HCT116 (cell line): ENCODE measurements at regions of chrX and their contacts with region 1.

Region 1: DNA sequence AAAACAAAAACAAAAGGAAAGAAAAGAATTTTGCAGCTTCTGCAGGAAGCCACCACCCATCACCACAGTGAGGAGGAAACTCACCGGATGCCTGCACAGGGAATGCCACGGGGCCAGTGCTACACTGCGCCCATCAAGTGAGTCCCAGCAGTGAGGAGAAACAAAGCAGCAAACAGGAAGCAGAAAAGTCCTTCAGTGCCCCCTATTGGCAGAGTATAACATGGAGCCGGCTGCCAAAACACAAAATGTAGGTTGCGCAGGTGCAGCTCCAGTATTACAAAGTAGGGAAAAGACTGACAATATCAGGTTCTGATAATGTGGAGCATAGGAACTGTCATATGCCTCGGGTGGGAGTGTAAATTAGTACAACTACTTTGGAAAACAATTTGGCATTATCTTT is 23.3 kb upstream of the SCML2 start:
- DNase-seq: peak; percentile 29
- ATAC-seq: peak; percentile 92
- H3K4me3 ChIP-seq: no peak overlapping the region
- H3K27ac ChIP-seq: no peak overlapping the region
- H3K4me1 ChIP-seq: no peaks in the 10 kb centered on the region
- H3K27me3 ChIP-seq: no peaks in the 10 kb centered on the region
- CTCF ChIP-seq: peak; percentile 38 to 64 (median 56); a peak in 5 of 6 replicates
- POLR2A ChIP-seq: no peak
- RAD21 ChIP-seq: peak; percentile 69

Region 2: GRCh38 chrX:17744896-17745523 is 632.8 kb before region 1 on chrX:
- CTCF ChIA-PET with region 1: no interaction called
- POLR2A ChIA-PET with region 1: no interaction called
- RAD21 ChIA-PET with region 1: no interaction called
- intact Hi-C with region 1: loop called (anchors 2 kb)
- DNase-seq: no peak
- ATAC-seq: no peak
- H3K4me3 ChIP-seq: no peak overlapping the region
- H3K27ac ChIP-seq: no peak overlapping the region
- H3K4me1 ChIP-seq: no peaks in the 10 kb centered on the region
- H3K27me3 ChIP-seq: no peaks in the 10 kb centered on the region
- CTCF ChIP-seq: peak; percentile 17 to 44 (median 24); a peak in 3 of 6 replicates
- POLR2A ChIP-seq: no peak
- RAD21 ChIP-seq: peak; percentile 51

Region 3: DNA sequence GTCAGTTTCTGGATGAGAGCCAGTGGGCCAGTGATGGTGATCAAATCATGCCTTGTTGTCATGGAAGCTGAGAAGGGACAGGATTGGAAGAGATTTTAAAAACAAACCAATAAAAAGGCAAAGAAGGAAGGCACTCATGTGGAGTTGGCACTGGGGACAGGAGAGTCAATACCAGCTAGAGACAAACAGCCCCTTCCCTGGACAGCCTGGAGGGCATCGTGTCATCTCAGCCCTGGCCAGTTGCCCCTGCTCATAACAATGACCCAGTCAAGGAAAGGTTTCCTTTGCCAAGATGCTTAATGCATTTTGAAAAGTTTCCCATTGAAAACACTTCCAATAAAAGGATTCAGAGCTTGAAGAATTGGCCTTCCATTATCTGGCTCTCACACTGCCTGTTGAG is 585.0 kb before region 1 on chrX:
- CTCF ChIA-PET with region 1: no interaction called
- POLR2A ChIA-PET with region 1: no interaction called
- RAD21 ChIA-PET with region 1: no interaction called
- intact Hi-C with region 1: loop called (anchors 10 kb)
- DNase-seq: no peak
- ATAC-seq: no peak
- H3K4me3 ChIP-seq: no peak overlapping the region
- H3K27ac ChIP-seq: no peak overlapping the region
- H3K4me1 ChIP-seq: no peaks in the 10 kb centered on the region
- H3K27me3 ChIP-seq: no peaks in the 10 kb centered on the region
- CTCF ChIP-seq: no peak
- POLR2A ChIP-seq: no peak
- RAD21 ChIP-seq: no peak

Region 4: GRCh38 chrX:17930850-17931249 is 446.9 kb before region 1 on chrX:
- CTCF ChIA-PET with region 1: no interaction called
- POLR2A ChIA-PET with region 1: no interaction called
- RAD21 ChIA-PET with region 1: no interaction called
- intact Hi-C with region 1: loop called (anchors 5 kb)
- DNase-seq: no peak
- ATAC-seq: no peak
- H3K4me3 ChIP-seq: no peak overlapping the region
- H3K27ac ChIP-seq: no peak overlapping the region
- H3K4me1 ChIP-seq: no peaks in the 10 kb centered on the region
- H3K27me3 ChIP-seq: no peaks in the 10 kb centered on the region
- CTCF ChIP-seq: 0 out of 6 replicates have a peak, but pooled peaks of 2 of the 3 experiments have one; percentile 9 to 12
- POLR2A ChIP-seq: no peak
- RAD21 ChIP-seq: peak; percentile 29; the same call in 1 of the 2 replicates

Region 5: GRCh38 chrX:18228069-18228468 is 149.7 kb before region 1 on chrX:
- CTCF ChIA-PET with region 1: no interaction called
- POLR2A ChIA-PET with region 1: no interaction called
- RAD21 ChIA-PET with region 1: no interaction called
- intact Hi-C with region 1: no loop called
- DNase-seq: no peak
- ATAC-seq: no peak
- H3K4me3 ChIP-seq: no peak overlapping the region
- H3K27ac ChIP-seq: no peak overlapping the region
- H3K4me1 ChIP-seq: no peaks in the 10 kb centered on the region
- H3K27me3 ChIP-seq: no peaks in the 10 kb centered on the region
- CTCF ChIP-seq: no peak
- POLR2A ChIP-seq: no peak
- RAD21 ChIP-seq: no peak